Left colon (tissue), 2 donors: ENCODE measurements at regions of chr7 and their contacts with region 1.

Region 1: GRCh38 chr7:137992550-137993394 is 9.1 kb downstream of the CREB3L2 start:
- DNase-seq: peak in 1 of 2 donors; percentile 75
- ATAC-seq: peak; percentile 46

Region 2: DNA sequence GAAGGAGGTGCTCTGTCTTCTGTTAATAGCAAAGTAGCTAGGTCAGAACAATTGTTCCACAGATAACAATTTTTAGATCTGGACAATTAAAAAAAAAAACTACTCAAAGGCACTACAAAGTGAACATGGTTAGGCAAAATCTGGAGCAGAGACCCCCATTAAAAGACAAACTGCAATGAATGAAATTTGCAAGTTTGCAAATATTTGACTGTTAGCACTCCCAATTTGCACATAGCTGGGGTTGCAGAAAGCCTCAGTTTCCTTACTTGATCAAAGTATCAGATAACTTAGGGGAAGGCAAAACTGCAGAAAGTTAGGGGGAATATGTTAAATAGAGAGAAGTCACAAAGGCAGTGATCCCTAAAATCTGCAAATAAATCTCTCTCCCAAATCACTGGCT is 214.3 kb before region 1 on chr7:
- intact Hi-C with region 1: no loop called
- DNase-seq: no peak
- ATAC-seq: no peak

Region 3: GRCh38 chr7:137943147-137943551 is 49.6 kb before region 1 on chr7:
- intact Hi-C with region 1: loop called in 1 of 2 experiments (anchors 10 kb)
- DNase-seq: no peak
- ATAC-seq: no peak

Region 4: GRCh38 chr7:138324941-138325340 is 332.2 kb after region 1 on chr7:
- intact Hi-C with region 1: no loop called
- DNase-seq: no peak
- ATAC-seq: no peak